Naive thymus-derived CD8-positive, alpha-beta T cell (primary cell): ENCODE measurements at regions of chr16 and their contacts with region 1.

Region 1: GRCh38 chr16:4506450-4506849 is 30.3 kb downstream of the HMOX2 start:
- DNase-seq: peak in 9 of 10 donors; percentile 44 to 78 (median 58)
- ATAC-seq: peak; percentile 27 to 33
- H3K4me3 Mint-ChIP-seq: peak overlapping the region; percentile 64 to 87 (median 80)
- H3K27ac Mint-ChIP-seq: peak overlapping the region; percentile 95 to 100 (median 99)
- H3K4me1 Mint-ChIP-seq: peaks cover 36 to 70% (median 65%) of the 10 kb centered on the region in 4 donors
- H3K27me3 Mint-ChIP-seq: no peaks in the 10 kb centered on the region

Region 2: DNA sequence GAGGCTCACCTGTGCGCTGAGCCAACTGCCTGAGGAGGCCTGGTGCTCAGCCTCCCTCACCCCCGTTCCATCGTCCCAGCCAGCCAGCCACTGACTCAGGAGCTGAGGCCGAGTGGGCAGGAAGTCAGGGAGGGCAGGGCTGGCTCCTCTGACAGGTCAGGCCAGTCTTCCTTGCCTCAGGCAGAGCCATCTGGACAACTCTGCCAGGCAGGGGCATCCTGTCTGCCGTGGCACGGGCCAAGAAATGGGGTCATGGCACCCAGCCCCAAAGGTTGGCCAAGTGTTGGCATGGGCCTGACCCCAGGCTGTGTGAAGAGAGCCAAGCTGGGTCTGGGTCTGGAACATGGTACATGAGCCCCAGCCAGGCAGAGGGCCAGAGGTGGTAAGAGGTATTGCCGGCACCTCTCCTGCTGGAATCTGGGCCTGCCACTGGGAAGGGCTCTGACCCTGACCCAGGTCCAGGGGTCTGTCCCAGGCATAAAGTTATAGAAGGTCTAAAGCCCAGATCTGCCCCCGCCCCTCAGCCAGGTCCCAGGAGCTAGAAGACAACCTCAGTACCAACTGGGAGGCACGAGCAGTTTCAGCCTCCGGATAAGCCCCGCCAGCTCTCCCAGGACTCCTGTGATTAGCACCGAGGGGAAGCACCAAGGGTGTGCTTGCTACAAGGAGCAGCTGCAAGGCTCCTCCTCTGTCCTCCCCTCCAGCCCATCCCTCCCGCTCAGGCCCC is 137.3 kb before region 1 on chr16:
- POLR2A ChIA-PET with region 1: no interaction called
- DNase-seq: peak in 1 of 10 donors; percentile 3
- ATAC-seq: no peak
- H3K4me3 Mint-ChIP-seq: peak overlapping the region in 1 of 10 donors; percentile 56
- H3K27ac Mint-ChIP-seq: peak overlapping the region in 3 of 10 donors; percentile 14 to 59 (median 44)
- H3K4me1 Mint-ChIP-seq: peaks cover 7 to 32% (median 14%) of the 10 kb centered on the region in 4 donors
- H3K27me3 Mint-ChIP-seq: no peaks in the 10 kb centered on the region

Region 3: DNA sequence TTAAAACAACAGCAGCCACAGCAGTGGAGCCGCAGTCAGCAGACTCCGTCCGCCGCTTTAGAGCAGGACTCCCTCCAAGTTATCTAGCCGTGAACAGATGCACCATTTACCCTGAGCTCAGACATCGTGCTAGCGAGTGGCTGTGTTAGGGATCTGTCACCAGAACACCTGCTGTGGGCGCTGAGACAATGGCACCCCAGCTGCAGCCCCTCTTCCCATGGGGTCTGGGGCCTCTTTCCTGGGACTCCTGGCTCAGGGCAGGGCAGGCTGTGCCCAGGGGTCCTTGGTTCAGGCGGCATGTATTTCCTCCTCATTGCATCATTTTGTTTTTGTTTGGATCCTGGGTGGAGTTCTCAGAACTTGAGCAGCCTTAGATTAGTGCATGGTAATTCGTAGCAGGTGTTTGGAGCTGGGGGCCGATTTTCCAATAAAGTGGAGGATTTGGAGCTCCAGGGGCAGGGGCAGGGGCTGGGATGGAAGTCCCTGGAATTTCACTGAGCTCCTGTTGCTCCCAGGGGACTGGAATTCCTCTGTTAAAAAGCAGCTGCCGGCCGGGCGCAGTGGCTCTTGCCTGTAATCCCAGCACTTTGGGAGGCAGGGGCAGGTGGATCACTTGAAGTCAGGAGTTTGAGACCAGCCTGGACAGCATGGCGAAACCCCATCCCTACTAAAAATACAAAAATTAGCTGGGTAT is 55.4 kb before region 1 on chr16:
- POLR2A ChIA-PET with region 1: no interaction called
- DNase-seq: no peak
- ATAC-seq: no peak
- H3K4me3 Mint-ChIP-seq: no peak overlapping the region
- H3K27ac Mint-ChIP-seq: peak overlapping the region in 1 of 10 donors; percentile 11
- H3K4me1 Mint-ChIP-seq: no peaks in the 10 kb centered on the region
- H3K27me3 Mint-ChIP-seq: no peaks in the 10 kb centered on the region

Region 4: DNA sequence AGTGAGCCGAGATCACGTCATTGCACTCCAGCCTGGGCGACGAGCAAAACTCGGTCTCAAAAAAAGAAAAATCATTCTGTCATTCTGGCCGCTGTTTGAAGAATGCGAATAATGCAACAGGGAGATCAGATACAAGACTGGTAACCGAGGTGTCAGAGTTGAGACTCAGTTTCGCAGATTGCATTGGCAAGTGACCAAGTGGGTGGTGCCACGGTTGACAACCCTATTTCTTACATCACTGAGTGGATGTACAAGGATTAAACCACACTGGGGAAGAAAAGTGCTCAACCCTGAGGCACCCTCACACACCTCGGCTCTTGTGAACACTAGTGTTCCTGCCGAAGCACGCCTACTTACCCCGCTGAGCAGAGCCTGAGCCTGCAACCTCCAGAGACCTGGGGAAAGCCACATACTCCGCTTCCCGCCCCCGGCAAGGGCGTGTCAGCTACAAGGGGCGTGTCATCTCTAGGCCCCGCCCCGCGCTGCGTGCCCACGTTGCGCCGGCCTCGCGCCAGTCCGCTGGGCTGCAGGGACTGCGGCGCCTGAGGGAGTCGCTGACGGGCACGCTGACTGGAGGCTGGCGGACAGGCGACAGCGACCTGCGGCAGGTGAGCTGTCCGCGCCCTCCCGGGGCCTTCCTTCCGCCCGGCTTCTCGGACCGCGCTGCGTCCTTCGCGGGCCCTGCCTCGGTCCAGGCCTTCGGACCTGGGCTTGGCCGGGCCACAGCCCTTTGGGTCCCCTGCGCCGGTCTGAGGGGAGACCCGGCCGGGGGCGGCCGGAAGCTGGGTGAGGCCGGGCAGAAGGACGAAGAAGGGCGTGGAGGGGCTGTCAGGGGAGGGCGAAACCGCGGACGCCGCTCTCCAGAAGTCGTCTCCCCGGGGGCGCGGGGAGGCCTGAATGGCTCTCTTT is 30.3 kb before region 1 on chr16 and contains the start of gene HMOX2:
- POLR2A ChIA-PET with region 1: interaction called, 324 read pairs
- DNase-seq: peak; percentile 87 to 94 (median 92)
- ATAC-seq: peak; percentile 77 to 80
- H3K4me3 Mint-ChIP-seq: peak within 1 kb of the TSS; percentile 85 to 97 (median 91)
- H3K27ac Mint-ChIP-seq: peak within 1 kb of the TSS; percentile 89 to 96 (median 94)
- H3K4me1 Mint-ChIP-seq: peaks cover 16 to 60% (median 50%) of the 10 kb centered on the region in 4 donors
- H3K27me3 Mint-ChIP-seq: no peaks in the 10 kb centered on the region
- polyA plus RNA-seq, gene HMOX2: 123 to 210 (median 145) TPM

Region 5: GRCh38 chr16:4494746-4495490 is 11.5 kb before region 1 on chr16:
- POLR2A ChIA-PET with region 1: interaction called, 207 read pairs
- DNase-seq: no peak
- ATAC-seq: peak in 1 of 2 donors; percentile 10
- H3K4me3 Mint-ChIP-seq: peak overlapping the region in 4 of 10 donors; percentile 0 to 48 (median 26)
- H3K27ac Mint-ChIP-seq: peak overlapping the region; percentile 78 to 99 (median 88)
- H3K4me1 Mint-ChIP-seq: peaks cover 42 to 93% (median 88%) of the 10 kb centered on the region in 4 donors
- H3K27me3 Mint-ChIP-seq: no peaks in the 10 kb centered on the region

Region 6: DNA sequence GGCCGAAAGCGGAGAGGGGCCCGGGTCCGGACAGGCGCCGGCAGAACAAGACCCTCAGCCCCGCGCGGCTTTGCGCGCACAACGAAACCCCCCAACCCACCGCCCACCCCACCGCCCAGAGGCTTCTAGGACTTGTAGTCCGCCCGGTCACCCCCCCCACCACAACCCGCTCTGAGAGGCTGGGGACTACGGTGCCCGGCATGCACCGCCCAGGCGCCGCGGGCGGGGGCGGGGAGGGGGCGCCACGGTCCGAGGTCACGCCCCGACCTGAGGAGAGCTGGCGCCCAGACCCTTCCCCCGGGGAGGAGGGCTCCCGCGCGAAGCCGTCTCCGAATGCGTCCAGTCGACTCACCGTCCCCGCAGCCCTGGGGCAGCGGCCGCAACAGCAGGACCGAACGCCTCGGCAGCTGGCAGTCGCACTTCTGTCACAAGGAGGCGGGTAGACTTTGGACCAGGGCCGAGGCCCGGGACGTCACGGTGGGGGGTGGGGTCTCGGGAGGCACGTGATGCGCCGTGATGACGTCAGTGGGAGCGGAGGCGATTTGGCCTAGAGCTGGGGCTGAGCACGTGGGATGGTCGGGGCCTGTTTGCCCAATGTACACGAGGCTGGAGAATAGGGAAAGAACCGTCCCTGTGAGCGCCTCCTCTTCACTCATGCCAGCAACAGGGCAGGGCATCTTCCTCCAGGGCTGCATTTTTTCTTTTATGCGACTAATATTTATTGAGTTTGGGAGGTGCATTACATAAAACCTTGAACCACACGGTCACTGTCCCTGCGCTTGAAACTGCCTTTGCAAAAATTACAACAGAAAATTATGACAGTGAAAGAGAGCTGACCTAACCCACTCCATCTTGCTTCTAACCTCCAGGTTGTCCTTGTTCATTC is 32.1 kb after region 1 on chr16 and contains the start of gene CDIP1:
- POLR2A ChIA-PET with region 1: interaction called, 21 read pairs
- DNase-seq: peak; percentile 84 to 97 (median 92)
- ATAC-seq: peak; percentile 85 to 88
- H3K4me3 Mint-ChIP-seq: peak within 1 kb of the TSS; percentile 75 to 91 (median 82)
- H3K27ac Mint-ChIP-seq: peak within 1 kb of the TSS; percentile 87 to 98 (median 94)
- H3K4me1 Mint-ChIP-seq: peaks cover 25 to 46% (median 41%) of the 10 kb centered on the region in 4 donors
- H3K27me3 Mint-ChIP-seq: no peaks in the 10 kb centered on the region
- polyA plus RNA-seq, gene CDIP1: 18.2 to 25.3 (median 25.0) TPM